Mammary epithelial cell (primary cell): ENCODE measurements at regions of chr13 and their contacts with region 1.

Region 1: GRCh38 chr13:43489233-43489632 is 297.5 kb downstream of the ENOX1 start:
- DNase-seq: no peak
- H3K4me3 ChIP-seq: no peak overlapping the region
- H3K27ac ChIP-seq: no peak overlapping the region
- H3K4me1 ChIP-seq: no peaks in the 10 kb centered on the region
- H3K27me3 ChIP-seq: no peaks in the 10 kb centered on the region
- CTCF ChIP-seq: no peak

Region 2: DNA sequence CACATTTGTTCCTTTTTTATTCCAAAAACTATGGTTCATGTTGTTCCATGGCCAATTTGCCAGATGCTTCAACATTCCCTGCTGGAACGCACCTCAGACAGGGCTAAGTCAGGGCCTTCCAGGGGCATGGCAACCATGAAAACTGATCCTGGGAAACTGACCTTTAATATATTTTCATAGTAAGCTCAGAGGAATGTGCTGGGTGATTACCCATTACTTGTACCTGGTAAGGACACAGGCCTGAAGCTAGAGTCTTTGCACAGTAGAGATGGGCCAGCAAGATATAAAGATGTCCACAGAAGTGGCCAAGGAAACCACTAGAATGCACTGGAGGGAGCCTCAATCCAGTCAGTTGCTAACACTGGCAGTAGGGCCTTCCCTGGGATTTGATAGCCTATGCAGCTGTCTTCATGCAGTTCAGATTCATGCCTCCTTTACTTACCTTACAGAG is 55.5 kb before region 1 on chr13:
- CTCF ChIA-PET with region 1: no interaction called
- dilution Hi-C with region 1: no loop called
- in situ Hi-C with region 1: no loop called
- intact Hi-C with region 1: no loop called
- DNase-seq: peak; percentile 0
- H3K4me3 ChIP-seq: no peak overlapping the region
- H3K27ac ChIP-seq: no peak overlapping the region
- H3K4me1 ChIP-seq: no peaks in the 10 kb centered on the region
- H3K27me3 ChIP-seq: no peaks in the 10 kb centered on the region
- CTCF ChIP-seq: no peak

Region 3: GRCh38 chr13:43464578-43465264 is 24.5 kb before region 1 on chr13:
- CTCF ChIA-PET with region 1: no interaction called
- dilution Hi-C with region 1: no loop called
- in situ Hi-C with region 1: no loop called
- intact Hi-C with region 1: loop called (anchors 1 kb)
- DNase-seq: no peak
- H3K4me3 ChIP-seq: no peak overlapping the region
- H3K27ac ChIP-seq: no peak overlapping the region
- H3K4me1 ChIP-seq: no peaks in the 10 kb centered on the region
- H3K27me3 ChIP-seq: no peaks in the 10 kb centered on the region
- CTCF ChIP-seq: no peak